Activated T-helper 2 cell treated with anti-CD3 and anti-CD28 coated beads, Interferon-gamma antibody, Interleukin-2, Interleukin-4, amounts not matched to agents 10 μg/mL and 5 μg/mL and 100 μg/mL, durations not matched to agents 14 hours and 24 hours and 36 hours (primary cell): ENCODE measurements at regions of chr2 and their contacts with region 1.

Region 1: GRCh38 chr2:241637000-241637791 is at the starts of genes ATG4B and THAP4:
- DNase-seq: peak; percentile 79
- H3K4me3 Mint-ChIP-seq: peak within 1 kb of the TSS; percentile 94
- H3K27ac Mint-ChIP-seq: peak within 1 kb of the TSS; percentile 92
- H3K4me1 Mint-ChIP-seq: peaks cover 42% of the 10 kb centered on the region
- H3K27me3 Mint-ChIP-seq: no peaks in the 10 kb centered on the region
- total RNA-seq, gene ATG4B: 117 TPM in 2 replicates
- total RNA-seq, gene THAP4: 48.7 and 53.3 TPM in 2 replicates

Region 2: DNA sequence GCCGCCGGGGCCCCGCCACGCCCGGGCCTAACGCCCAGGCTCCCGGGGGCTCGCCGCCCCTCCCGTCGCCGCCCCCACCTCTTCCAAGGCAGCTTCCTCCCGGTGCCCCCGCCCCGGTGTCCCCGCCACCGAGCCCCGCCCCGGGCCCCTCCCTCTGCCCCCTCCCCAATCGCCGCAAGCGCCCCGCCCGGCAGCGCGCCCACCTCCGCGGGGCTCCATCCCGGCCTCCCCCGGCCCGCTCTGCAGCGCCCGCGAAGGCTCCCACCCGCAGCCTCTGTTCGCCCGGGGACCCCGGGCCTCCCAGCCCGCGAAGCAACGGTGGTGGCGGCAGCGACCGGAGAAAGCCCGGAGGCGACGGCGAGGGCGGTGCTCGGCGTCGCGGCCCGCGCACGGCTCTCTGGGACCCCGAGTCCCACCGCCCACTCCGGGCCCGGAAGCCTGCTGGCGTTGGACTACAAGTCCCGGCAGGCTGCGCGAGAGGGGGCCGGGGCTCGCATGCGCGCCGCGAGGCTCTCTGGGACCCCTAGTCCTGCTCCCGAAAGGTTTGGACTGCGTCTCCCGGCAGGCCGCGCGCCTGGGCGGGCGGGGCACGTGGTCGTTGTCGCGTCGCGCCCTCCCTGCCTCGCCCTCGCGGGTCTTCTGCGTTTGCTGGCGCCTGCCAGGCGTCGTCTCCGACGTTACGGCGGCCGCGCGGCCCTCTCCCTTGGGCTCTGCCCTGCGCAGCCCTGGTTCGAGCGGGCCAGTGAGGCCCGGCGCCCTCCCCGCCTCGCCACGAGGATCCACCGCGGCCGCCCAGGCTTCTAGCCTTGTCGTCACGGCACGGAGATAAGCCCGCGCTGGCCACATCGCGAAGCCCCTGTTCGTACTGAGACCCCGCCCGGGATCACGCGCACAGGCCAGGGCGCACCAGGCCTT is 128.7 kb before region 1 on chr2 and contains the start of gene STK25:
- intact Hi-C with region 1: loop called (anchors 5 kb)
- DNase-seq: peak; percentile 97
- H3K4me3 Mint-ChIP-seq: peak within 1 kb of the TSS; percentile 82
- H3K27ac Mint-ChIP-seq: peak within 1 kb of the TSS; percentile 69
- H3K4me1 Mint-ChIP-seq: peaks cover 17% of the 10 kb centered on the region
- H3K27me3 Mint-ChIP-seq: peaks cover 4% of the 10 kb centered on the region
- total RNA-seq, gene STK25: 116 and 122 TPM in 2 replicates

Region 3: DNA sequence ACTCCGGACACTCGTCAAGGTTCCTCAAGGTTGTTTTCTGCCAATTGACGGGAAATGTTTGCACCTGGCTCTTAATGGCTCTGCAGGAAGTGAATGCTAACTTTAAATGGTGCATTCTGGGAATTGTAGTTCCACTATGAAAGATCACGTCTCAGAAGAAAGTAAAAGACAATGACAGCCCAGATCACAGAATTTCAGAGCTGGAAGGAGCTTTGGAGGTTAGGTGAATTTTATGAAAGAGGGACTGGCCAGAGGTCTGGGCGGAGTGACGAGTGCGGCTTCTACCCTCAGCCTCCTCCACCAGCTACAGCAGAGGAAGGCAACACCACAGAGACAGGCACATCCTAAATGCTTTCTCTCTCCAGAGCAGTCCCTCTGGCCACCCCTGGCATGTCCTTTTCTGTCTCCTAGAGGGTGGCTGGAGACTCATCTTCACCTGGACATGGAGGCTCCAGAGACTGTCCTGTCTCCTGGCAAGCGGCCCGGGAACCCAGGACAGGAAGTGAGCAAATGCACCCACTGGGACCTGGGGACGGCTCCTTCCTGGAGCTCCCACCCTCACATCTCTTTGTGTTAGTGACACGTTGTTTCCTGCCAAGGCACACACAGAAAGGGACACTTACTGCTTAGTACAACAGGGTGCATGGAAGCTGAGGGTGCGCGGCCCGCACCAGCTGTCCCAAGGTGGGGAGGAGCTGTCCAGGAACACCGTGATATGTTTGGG is 19.6 kb before region 1 on chr2:
- intact Hi-C with region 1: loop called (anchors 2 kb)
- DNase-seq: peak; percentile 28
- H3K4me3 Mint-ChIP-seq: peak overlapping the region; percentile 92
- H3K27ac Mint-ChIP-seq: peak overlapping the region; percentile 99
- H3K4me1 Mint-ChIP-seq: peaks cover 34% of the 10 kb centered on the region
- H3K27me3 Mint-ChIP-seq: no peaks in the 10 kb centered on the region

Region 4: DNA sequence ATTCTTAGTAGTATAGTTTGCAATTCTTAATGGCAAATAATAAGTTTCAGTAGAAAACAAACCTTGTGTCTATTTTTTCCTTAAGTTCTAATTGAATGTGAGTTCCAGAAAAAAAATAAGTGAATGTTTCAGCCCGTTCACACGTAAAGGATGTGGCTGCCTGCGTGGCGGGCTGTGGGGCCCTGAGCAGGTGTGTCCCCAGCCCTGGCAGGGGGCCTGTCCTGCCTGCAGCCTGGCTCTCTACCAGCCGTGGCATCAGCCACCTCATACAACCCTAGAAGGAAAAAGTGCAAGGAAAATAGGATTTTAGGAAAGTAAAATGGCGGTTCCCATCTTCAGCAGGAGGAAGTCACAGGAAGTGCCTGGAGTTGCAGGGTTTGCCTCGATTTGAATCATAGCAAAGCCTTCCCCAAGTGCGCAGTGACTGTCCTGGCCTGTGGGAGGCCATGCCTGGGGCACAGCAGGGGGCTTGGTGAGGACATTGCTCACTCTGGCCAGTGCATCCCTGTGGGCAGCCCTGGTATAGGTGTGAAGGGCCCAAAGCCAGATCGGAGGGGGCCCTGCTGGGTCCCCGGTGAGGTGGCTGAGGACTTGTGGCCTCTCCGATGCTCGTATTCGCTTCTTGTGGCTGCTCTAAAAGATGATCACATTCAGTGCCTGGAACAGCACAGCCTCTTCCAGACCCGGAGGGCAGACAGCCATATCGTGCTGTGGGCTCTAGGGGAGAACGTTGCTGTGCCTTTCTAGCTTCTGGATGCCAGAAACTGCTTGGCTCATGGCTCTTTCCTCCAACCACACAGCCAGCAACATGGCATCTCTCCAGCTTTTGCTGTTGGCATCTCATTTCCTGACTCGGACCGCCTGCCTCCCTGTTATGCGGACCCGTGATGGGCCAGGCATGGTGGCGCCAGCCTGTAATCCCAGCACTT is 36.9 kb after region 1 on chr2:
- intact Hi-C with region 1: no loop called
- DNase-seq: no peak
- H3K4me3 Mint-ChIP-seq: no peak overlapping the region
- H3K27ac Mint-ChIP-seq: no peak overlapping the region
- H3K4me1 Mint-ChIP-seq: peaks cover 2% of the 10 kb centered on the region
- H3K27me3 Mint-ChIP-seq: no peaks in the 10 kb centered on the region